CD8-positive, alpha-beta T cell (primary cell): ENCODE measurements at regions of chr3 and their contacts with region 1.

Region 1: GRCh38 chr3:83863380-83863779 is 1095.4 kb upstream of the CADM2 start:
- DNase-seq: no peak
- ATAC-seq: no peak
- H3K4me3 ChIP-seq: no peak overlapping the region
- H3K4me3 Mint-ChIP-seq: no peak overlapping the region
- H3K27ac ChIP-seq: no peak overlapping the region
- H3K27ac Mint-ChIP-seq: no peak overlapping the region
- H3K4me1 ChIP-seq: no peaks in the 10 kb centered on the region
- H3K4me1 Mint-ChIP-seq: no peaks in the 10 kb centered on the region
- H3K27me3 ChIP-seq: no peaks in the 10 kb centered on the region
- H3K27me3 Mint-ChIP-seq: no peaks in the 10 kb centered on the region
- CTCF ChIP-seq: no peak

Region 2: GRCh38 chr3:83849106-83849730 is 14.2 kb before region 1 on chr3:
- CTCF ChIA-PET with region 1: no interaction called
- POLR2A ChIA-PET with region 1: no interaction called
- intact Hi-C with region 1: no loop called
- DNase-seq: no peak
- ATAC-seq: no peak
- H3K4me3 ChIP-seq: no peak overlapping the region
- H3K4me3 Mint-ChIP-seq: no peak overlapping the region
- H3K27ac ChIP-seq: no peak overlapping the region
- H3K27ac Mint-ChIP-seq: no peak overlapping the region
- H3K4me1 ChIP-seq: no peaks in the 10 kb centered on the region
- H3K4me1 Mint-ChIP-seq: no peaks in the 10 kb centered on the region
- H3K27me3 ChIP-seq: no peaks in the 10 kb centered on the region
- H3K27me3 Mint-ChIP-seq: no peaks in the 10 kb centered on the region
- CTCF ChIP-seq: no peak

Region 3: DNA sequence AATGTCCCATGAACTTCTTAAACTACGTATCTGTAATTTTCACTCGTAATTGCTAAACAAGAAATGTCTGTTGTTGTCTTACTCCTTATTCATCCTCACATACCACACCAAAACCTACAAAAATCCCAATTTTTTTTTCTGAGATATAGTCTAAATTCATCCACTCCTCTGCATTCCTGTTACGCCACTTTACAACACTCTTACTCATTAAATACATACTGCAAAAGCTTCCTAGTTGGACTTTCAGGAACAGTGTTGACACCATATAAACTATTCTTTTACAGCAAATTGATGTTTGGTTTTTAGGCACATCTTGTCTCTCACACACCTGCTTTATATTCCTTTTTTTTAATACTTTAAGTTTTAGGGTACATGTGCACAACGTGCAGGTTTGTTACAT is 160.5 kb after region 1 on chr3:
- CTCF ChIA-PET with region 1: no interaction called
- POLR2A ChIA-PET with region 1: no interaction called
- intact Hi-C with region 1: no loop called
- DNase-seq: no peak
- ATAC-seq: no peak
- H3K4me3 ChIP-seq: no peak overlapping the region
- H3K4me3 Mint-ChIP-seq: no peak overlapping the region
- H3K27ac ChIP-seq: no peak overlapping the region
- H3K27ac Mint-ChIP-seq: no peak overlapping the region
- H3K4me1 ChIP-seq: no peaks in the 10 kb centered on the region
- H3K4me1 Mint-ChIP-seq: no peaks in the 10 kb centered on the region
- H3K27me3 ChIP-seq: no peaks in the 10 kb centered on the region
- H3K27me3 Mint-ChIP-seq: no peaks in the 10 kb centered on the region
- CTCF ChIP-seq: no peak

Region 4: DNA sequence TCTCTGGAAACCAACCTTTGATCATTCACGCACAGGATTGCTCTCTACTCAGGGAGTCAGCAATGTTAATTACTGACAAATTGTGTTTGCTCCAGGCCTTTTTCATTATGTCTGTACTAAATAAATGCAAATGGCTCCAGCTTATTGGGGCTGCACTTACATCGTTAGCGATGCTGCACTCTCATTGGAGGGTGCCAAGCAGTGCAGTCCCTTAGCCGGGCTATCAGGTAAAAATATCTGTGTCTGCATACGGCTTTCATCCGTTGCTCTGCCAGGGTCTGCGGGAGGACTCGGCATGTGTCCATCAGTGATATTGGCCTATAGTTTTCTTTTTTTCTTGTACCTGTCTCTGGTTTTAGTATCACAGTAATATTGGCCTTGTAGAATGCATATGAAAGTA is 623.9 kb after region 1 on chr3:
- CTCF ChIA-PET with region 1: no interaction called
- POLR2A ChIA-PET with region 1: no interaction called
- intact Hi-C with region 1: loop called in 1 of 2 experiments (anchors 5 kb)
- DNase-seq: no peak
- ATAC-seq: no peak
- H3K4me3 ChIP-seq: no peak overlapping the region
- H3K4me3 Mint-ChIP-seq: no peak overlapping the region
- H3K27ac ChIP-seq: no peak overlapping the region
- H3K27ac Mint-ChIP-seq: no peak overlapping the region
- H3K4me1 ChIP-seq: no peaks in the 10 kb centered on the region
- H3K4me1 Mint-ChIP-seq: no peaks in the 10 kb centered on the region
- H3K27me3 ChIP-seq: no peaks in the 10 kb centered on the region
- H3K27me3 Mint-ChIP-seq: no peaks in the 10 kb centered on the region
- CTCF ChIP-seq: no peak